Aorta (tissue), 5 donors: ENCODE measurements at regions of chr17 and their contacts with region 1.

Region 1: GRCh38 chr17:74961657-74962490 is 10.7 kb downstream of the HID1 start:
- DNase-seq: peak; percentile 93 to 95
- ATAC-seq: peak; percentile 83
- H3K4me3 ChIP-seq: no peak overlapping the region
- H3K27ac ChIP-seq: no peak overlapping the region
- H3K4me1 ChIP-seq: no peaks in the 10 kb centered on the region
- H3K27me3 ChIP-seq: no peaks in the 10 kb centered on the region

Region 2: DNA sequence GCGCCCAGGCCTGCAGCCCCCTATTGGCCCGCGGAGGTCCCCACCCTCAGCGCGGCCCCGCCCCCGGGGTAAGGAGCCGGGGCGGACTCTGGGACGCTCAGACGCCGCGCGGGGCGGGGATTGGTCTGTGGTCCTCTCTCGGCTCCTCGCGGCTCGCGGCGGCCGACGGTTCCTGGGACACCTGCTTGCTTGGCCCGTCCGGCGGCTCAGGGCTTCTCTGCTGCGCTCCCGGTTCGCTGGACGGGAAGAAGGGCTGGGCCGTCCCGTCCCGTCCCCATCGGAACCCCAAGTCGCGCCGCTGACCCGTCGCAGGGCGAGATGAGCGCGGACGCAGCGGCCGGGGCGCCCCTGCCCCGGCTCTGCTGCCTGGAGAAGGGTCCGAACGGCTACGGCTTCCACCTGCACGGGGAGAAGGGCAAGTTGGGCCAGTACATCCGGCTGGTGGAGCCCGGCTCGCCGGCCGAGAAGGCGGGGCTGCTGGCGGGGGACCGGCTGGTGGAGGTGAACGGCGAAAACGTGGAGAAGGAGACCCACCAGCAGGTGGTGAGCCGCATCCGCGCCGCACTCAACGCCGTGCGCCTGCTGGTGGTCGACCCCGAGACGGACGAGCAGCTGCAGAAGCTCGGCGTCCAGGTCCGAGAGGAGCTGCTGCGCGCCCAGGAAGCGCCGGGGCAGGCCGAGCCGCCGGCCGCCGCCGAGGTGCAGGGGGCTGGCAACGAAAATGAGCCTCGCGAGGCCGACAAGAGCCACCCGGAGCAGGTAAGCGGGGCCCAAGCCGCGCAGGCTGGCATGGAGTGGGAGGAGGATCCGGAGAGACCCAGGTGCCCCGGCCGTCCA is 213.1 kb before region 1 on chr17 and contains the start of gene NHERF1:
- intact Hi-C with region 1: loop called in 1 of 2 experiments (anchors 10 kb)
- DNase-seq: peak; percentile 96 to 98
- ATAC-seq: peak; percentile 95
- H3K4me3 ChIP-seq: peak within 1 kb of the TSS; percentile 73 to 82
- H3K27ac ChIP-seq: peak within 1 kb of the TSS in 1 of 2 donors; percentile 53
- H3K4me1 ChIP-seq: no peaks in the 10 kb centered on the region
- H3K27me3 ChIP-seq: no peaks in the 10 kb centered on the region
- total RNA-seq, gene NHERF1: 17.6 to 21.1 TPM

Region 3: DNA sequence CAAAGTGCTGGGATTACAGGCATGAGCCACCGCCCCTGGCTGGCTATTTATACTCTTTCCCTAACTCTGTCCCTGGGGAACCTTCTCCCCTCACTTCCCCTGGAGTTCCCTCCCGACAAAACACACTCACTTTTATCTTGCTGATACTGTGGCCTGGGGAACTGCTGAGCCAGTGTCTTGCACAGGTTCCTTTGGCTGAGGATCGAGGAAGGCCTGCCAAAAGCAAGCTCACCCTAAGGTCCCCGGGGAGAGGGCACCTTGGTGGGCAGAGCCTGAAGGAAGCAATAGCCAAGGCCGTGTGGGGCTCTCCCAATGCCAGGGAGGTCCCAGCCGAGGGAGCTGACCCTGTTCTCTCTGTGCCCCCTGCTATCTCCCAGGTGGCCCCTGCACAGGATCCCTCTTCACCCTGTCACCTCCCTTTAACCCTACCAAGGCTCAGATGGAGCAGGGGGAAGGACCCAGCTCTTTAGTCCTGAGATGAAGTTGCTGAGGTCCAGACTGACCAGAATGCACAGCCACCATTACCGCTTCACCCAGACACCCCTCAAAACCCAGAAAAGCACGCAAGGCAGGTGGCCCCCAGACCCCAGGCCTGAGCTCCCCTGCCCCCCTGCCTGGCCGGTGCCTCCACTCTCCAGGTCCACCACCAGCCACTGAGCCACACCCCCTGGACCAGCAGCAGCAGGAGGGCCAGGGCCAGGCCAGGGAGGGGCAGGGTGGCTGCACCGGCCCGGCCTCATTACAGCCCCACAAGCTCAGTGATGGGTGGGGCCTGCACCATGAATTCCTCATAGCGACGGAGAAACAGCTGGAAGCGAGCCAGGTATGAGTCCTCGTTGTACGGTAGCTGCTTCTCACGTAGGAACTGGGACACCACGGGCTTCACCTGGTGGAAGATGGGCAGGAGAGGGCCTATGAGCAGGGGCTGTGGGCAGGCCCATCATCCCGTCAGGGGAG is 84.0 kb before region 1 on chr17:
- intact Hi-C with region 1: no loop called
- DNase-seq: no peak
- ATAC-seq: no peak
- H3K4me3 ChIP-seq: no peak overlapping the region
- H3K27ac ChIP-seq: no peak overlapping the region
- H3K4me1 ChIP-seq: no peaks in the 10 kb centered on the region
- H3K27me3 ChIP-seq: no peaks in the 10 kb centered on the region

Region 4: DNA sequence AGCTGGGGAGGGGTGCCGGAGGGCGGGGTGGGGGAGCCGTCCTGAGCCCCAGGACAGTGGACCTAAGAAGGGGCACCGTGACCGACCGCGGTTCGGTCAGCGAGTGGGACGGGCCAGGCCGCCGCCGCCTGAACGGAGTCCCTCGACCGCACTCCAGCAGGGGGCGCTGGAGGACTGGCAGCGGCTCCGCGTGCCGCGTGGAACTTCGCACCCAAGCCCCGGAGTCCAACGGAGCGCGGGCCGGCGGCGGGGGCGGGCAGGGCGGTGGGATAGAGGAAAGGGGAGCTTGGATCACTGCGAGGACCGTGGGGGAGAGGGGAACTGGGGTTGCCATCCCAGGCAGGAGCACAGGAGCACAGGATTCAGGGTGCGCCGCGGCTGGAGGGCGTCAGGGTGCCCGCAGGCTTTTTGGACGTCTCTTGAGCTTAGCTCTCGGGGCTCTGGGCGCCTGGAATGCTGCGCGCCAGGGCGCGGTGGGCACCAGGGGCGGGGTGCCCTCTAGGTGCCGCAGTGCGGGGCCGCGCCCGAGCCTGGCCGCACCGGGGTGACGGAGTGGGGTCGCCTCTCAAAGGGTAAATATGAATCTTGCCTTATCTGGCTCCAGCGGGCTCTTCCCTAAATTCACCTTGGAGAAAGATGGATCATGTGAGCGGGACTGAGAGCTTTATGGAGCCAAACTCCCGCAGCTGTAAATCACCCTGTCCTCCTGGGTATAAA is 38.2 kb before region 1 on chr17:
- intact Hi-C with region 1: loop called in 1 of 2 experiments (anchors 1 kb)
- DNase-seq: peak; percentile 82 to 91
- ATAC-seq: peak; percentile 74
- H3K4me3 ChIP-seq: no peak overlapping the region
- H3K27ac ChIP-seq: no peak overlapping the region
- H3K4me1 ChIP-seq: no peaks in the 10 kb centered on the region
- H3K27me3 ChIP-seq: peaks cover 0 to 3% of the 10 kb centered on the region in 2 donors

Region 5: DNA sequence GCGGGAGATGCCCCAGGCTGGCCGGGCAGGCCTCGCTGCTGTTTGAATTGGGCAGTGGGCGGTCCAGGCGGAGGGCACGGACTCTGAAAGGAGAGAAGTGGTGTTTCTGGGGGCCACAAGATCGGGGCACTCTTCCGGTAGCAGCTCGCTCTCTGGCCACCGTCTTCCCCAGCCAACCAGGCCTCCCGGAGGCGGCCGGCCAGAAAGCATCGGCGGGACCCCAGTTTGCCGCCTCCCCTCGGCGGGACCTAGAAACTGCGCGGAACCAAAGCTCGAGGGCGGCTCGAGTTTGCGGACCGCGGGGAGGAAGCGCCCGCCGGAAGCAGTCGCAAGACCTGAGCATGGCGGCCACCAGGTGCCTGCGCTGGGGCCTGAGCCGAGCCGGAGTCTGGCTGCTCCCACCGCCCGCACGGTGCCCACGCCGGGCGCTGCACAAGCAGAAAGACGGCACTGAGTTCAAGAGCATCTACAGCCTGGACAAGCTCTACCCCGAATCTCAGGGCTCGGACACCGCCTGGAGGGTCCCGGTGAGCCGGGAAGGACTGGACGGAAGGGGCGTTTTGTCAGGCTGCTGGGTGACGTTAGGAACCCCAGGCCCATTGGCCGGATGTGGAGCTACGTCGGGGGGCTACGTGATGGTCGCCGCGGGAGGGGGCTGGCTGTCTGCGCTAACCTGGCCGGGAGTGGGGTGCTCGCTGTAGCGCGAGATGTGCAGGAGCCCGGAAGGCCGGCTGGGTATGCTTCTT is 50.6 kb after region 1 on chr17 and contains the start of gene MRPL58:
- intact Hi-C with region 1: loop called (anchors 5 kb)
- DNase-seq: peak; percentile 88 to 94
- ATAC-seq: peak; percentile 98
- H3K4me3 ChIP-seq: peak within 1 kb of the TSS; percentile 22 to 85
- H3K27ac ChIP-seq: peak within 1 kb of the TSS in 1 of 2 donors; percentile 71
- H3K4me1 ChIP-seq: peaks cover 0 to 4% of the 10 kb centered on the region in 2 donors
- H3K27me3 ChIP-seq: no peaks in the 10 kb centered on the region
- total RNA-seq, gene MRPL58: 16.6 to 17.4 TPM

Region 6: DNA sequence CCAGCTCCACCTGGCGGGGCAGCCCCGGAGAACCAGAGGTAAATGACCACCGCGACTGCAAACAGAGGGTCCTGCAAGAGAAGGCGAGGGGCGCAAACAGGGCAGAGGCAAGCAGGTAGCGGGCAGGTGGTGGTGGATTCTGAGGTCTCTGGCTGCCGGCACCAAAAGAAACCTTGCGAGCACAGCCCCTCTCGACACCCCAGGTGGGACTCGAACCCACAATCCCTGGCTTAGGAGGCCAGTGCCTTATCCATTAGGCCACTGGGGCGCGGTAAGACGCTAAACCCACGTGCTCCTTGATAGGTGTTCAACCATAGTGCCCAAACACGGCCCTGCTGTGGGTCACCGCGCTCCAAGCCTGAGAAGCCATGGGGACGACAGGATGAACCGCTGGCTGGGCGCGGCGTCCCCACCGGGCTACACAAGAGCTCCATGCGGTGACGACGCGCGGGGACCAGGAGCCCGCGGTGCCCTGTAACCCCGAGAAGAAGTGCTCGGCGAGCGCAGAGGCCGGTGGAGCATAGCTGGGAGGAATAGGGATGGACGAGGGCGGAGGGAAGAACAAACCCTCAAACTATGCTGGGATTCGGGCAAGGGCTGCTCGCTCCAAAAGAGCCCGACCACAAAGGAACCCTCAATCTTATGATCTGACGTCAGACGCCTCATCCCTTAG is 72.5 kb after region 1 on chr17:
- intact Hi-C with region 1: loop called in 1 of 2 experiments (anchors 5 kb)
- DNase-seq: peak; percentile 88 to 95
- ATAC-seq: peak; percentile 91
- H3K4me3 ChIP-seq: peak overlapping the region; percentile 37 to 55
- H3K27ac ChIP-seq: peak overlapping the region; percentile 10 to 84
- H3K4me1 ChIP-seq: no peaks in the 10 kb centered on the region
- H3K27me3 ChIP-seq: no peaks in the 10 kb centered on the region

Region 7: GRCh38 chr17:75046582-75047289 is 84.9 kb after region 1 on chr17 and contains the starts of genes ATP5PD and KCTD2:
- intact Hi-C with region 1: no loop called
- DNase-seq: peak; percentile 98
- ATAC-seq: peak; percentile 100
- H3K4me3 ChIP-seq: peak within 1 kb of the TSS; percentile 96 to 99
- H3K27ac ChIP-seq: peak within 1 kb of the TSS; percentile 47 to 99
- H3K4me1 ChIP-seq: peaks cover 0 to 2% of the 10 kb centered on the region in 2 donors
- H3K27me3 ChIP-seq: no peaks in the 10 kb centered on the region
- total RNA-seq, gene ATP5PD: 136 to 149 TPM
- total RNA-seq, gene KCTD2: 21.4 to 26.4 TPM

Region 8: DNA sequence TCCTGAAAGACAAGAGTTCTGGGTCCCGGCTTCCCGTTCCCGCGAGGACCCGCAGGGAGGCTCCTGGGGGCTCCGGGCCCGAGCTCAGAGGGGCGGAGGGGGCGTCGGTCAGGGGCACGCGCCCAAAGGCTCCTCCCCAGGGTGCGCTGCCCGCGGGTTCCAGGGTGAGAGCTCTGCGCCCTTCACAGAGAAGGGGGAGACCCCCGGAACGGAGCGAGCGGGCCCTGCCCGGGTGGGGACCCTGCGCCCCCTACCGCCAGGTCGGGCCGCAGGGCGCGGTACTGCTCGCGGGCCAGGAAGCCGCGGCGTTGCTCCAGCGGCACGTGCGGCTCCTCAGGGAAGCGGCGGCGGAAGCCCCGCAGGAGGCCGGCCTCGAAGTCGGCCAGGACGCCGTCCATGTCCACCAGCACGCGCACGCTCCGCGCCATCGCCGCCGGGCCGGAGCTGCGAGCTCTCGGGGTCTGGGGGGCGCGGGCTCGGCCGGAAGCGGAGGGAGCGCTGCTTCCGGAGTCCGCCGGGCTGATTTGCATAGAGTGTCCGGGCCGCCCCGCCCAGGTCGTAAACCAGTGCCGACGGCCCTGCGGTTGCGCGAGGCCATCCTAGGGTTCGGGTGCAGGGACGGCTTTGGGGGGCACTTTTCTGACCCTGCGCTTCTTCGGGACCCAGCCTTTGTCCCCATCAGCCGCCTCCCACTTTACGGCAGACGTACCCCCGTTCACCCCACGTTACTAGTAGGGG is 169.6 kb after region 1 on chr17 and contains the start of gene NT5C:
- intact Hi-C with region 1: no loop called
- DNase-seq: peak; percentile 89 to 94
- ATAC-seq: peak; percentile 89
- H3K4me3 ChIP-seq: peak within 1 kb of the TSS; percentile 50 to 66
- H3K27ac ChIP-seq: peak within 1 kb of the TSS; percentile 16 to 78
- H3K4me1 ChIP-seq: no peaks in the 10 kb centered on the region
- H3K27me3 ChIP-seq: no peaks in the 10 kb centered on the region
- total RNA-seq, gene NT5C: 24.7 to 29.6 TPM

Region 9: GRCh38 chr17:75199886-75200618 is 238.2 kb after region 1 on chr17:
- intact Hi-C with region 1: loop called (anchors 5 kb)
- DNase-seq: no peak
- ATAC-seq: no peak
- H3K4me3 ChIP-seq: no peak overlapping the region
- H3K27ac ChIP-seq: no peak overlapping the region
- H3K4me1 ChIP-seq: no peaks in the 10 kb centered on the region
- H3K27me3 ChIP-seq: no peaks in the 10 kb centered on the region